IMR-90 (cell line): ENCODE measurements at regions of chr2 and their contacts with region 1.

Region 1: DNA sequence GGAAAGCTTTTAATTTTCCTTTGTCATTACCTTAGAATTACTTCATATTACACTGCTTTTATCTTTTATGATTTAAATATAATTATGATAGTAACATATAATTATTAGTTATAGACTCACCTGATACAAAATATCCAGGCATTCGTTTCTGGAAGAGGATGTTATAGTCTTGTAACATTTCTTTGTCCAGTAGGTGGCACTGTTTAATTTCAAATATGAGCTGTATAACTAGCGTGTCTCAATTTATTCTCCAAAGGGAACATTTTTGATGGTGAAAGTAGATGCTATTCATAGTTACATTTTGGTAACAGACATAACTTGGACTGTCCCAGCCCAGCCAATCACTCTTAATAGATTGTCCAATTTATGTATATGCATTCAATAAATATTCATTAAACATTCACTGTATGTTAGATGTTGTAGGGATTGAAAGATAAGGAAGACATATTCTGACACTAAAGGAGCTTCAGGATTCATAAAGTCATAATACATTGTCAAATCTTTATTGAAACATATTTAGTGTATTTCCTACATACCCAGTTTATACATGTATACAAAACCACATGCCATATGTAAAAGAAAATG is 19.2 kb downstream of the DAW1 start:
- DNase-seq: peak; percentile 61
- ATAC-seq: peak; percentile 82
- H3K4me3 ChIP-seq: no peak overlapping the region
- H3K27ac ChIP-seq: no peak overlapping the region
- H3K4me1 ChIP-seq: 0 out of 2 replicates have a peak, but pooled peaks cover 1% of the 10 kb centered on the region
- H3K27me3 ChIP-seq: no peaks in the 10 kb centered on the region
- CTCF ChIP-seq: peak; percentile 60
- POLR2A ChIP-seq: no peak
- RAD21 ChIP-seq: peak; percentile 60

Region 2: GRCh38 chr2:227627769-227628168 is 262.8 kb before region 1 on chr2:
- CTCF ChIA-PET with region 1: no interaction called
- POLR2A ChIA-PET with region 1: no interaction called
- dilution Hi-C with region 1: no loop called
- in situ Hi-C with region 1: no loop called
- intact Hi-C with region 1: no loop called
- DNase-seq: no peak
- ATAC-seq: no peak
- H3K4me3 ChIP-seq: no peak overlapping the region
- H3K27ac ChIP-seq: no peak overlapping the region
- H3K4me1 ChIP-seq: peaks cover 1% of the 10 kb centered on the region; the same call in 1 of the 2 replicates
- H3K27me3 ChIP-seq: no peaks in the 10 kb centered on the region
- CTCF ChIP-seq: no peak
- POLR2A ChIP-seq: no peak
- RAD21 ChIP-seq: no peak

Region 3: GRCh38 chr2:228657807-228658402 is 767.3 kb after region 1 on chr2:
- CTCF ChIA-PET with region 1: no interaction called
- POLR2A ChIA-PET with region 1: no interaction called
- dilution Hi-C with region 1: no loop called
- in situ Hi-C with region 1: loop called (anchors 25 kb)
- intact Hi-C with region 1: loop called (anchors 5 kb)
- DNase-seq: peak; percentile 46
- ATAC-seq: peak; percentile 21; the same call in 1 of the 2 replicates
- H3K4me3 ChIP-seq: no peak overlapping the region
- H3K27ac ChIP-seq: no peak overlapping the region
- H3K4me1 ChIP-seq: no peaks in the 10 kb centered on the region
- H3K27me3 ChIP-seq: no peaks in the 10 kb centered on the region
- CTCF ChIP-seq: peak; percentile 51
- POLR2A ChIP-seq: no peak
- RAD21 ChIP-seq: peak; percentile 67

Region 4: DNA sequence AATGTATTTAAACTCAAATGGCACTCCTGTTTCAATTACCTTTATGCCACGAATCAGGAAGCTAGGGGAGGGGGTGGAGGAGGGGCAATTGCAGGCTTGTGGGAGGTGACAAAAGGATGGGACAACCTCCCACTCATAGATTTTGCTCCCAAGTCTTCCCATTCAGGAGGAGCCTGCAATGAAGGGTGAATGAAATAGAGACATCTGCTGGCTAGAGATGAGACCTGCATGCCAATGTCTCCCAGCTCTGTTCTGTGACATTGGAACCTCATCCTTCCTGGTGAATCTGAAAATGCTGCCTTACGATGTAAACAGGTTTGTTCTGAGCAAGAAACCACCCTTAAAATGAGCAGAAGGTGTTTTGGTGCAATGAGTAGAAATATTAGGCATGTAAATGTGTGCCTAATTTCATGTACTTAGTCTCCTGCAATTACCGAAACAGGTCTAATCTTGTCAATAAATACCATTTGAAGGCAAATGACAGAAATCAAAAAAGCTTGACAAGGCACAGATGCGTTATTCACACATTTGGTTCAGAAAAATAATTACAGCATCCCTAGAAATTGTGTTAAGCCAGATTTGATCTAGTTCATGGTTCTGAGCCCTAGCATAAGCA is 1383.2 kb after region 1 on chr2:
- CTCF ChIA-PET with region 1: no interaction called
- POLR2A ChIA-PET with region 1: no interaction called
- dilution Hi-C with region 1: no loop called
- in situ Hi-C with region 1: no loop called
- intact Hi-C with region 1: loop called (anchors 1 kb)
- DNase-seq: peak; percentile 67
- ATAC-seq: peak; percentile 86
- H3K4me3 ChIP-seq: no peak overlapping the region; the same call in 1 of the 2 replicates
- H3K27ac ChIP-seq: no peak overlapping the region
- H3K4me1 ChIP-seq: no peaks in the 10 kb centered on the region
- H3K27me3 ChIP-seq: no peaks in the 10 kb centered on the region
- CTCF ChIP-seq: peak; percentile 58
- POLR2A ChIP-seq: no peak
- RAD21 ChIP-seq: peak; percentile 57

Region 5: GRCh38 chr2:229775614-229776313 is 1885.2 kb after region 1 on chr2:
- CTCF ChIA-PET with region 1: no interaction called
- POLR2A ChIA-PET with region 1: no interaction called
- dilution Hi-C with region 1: no loop called
- in situ Hi-C with region 1: no loop called
- intact Hi-C with region 1: loop called (anchors 5 kb)
- DNase-seq: peak; percentile 53
- ATAC-seq: peak; percentile 51; the same call in 1 of the 2 replicates
- H3K4me3 ChIP-seq: no peak overlapping the region
- H3K27ac ChIP-seq: no peak overlapping the region
- H3K4me1 ChIP-seq: peaks cover 5% of the 10 kb centered on the region
- H3K27me3 ChIP-seq: no peaks in the 10 kb centered on the region
- CTCF ChIP-seq: no peak
- POLR2A ChIP-seq: no peak
- RAD21 ChIP-seq: no peak